ENCODE measurements at regions of chr1 and their contacts with region 1.

Region 1: GRCh38 chr1:28581536-28582247 is 10.4 kb upstream of the RAB42 start:
- H3K4me3 ChIP-seq: peak overlapping the region; percentile 74
- H3K27ac ChIP-seq: peak overlapping the region; percentile 79
- H3K4me1 ChIP-seq: no peaks in the 10 kb centered on the region; the same call in 1 of the 2 replicates
- CTCF ChIP-seq: peak; percentile 81

Region 2: DNA sequence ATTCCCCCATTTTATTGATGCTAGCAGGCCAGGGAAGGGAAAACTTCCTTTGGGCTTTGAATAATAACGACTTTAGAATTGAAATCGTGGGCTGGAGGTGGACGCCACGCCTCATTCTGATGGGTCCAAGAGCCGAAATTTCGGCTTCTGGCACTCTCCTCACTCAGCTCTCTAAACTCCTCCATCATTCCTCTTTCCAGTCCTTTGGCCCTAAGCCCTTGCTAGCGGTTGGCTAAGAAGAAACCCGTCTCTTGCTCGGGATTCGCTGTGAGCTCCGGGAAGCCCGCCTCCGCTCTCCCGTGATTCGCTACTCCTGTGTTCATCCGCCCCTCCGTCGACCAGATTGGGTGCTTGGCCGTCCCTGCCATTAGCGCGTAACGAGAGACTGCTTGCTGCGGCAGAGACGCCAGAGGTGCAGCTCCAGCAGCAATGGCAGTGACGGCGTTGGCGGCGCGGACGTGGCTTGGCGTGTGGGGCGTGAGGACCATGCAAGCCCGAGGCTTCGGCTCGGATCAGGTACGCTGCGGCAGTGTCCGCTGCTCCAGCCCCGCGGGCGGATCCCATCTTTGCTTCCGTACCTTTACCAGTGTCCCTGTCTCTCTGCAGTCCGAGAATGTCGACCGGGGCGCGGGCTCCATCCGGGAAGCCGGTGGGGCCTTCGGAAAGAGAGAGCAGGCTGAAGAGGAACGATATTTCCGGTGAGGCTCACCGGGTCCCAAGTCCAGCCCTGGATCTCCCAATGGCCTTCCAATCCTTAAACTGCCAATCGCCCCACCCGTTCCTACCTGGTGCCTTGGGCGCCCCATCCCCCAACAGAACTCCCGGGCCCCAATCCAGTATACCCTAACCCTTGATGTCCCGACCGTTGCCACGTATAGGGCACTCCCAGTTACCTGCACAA is 345.7 kb before region 1 on chr1 and contains the start of gene ATP5IF1:
- CTCF ChIA-PET with region 1: no interaction called
- POLR2A ChIA-PET with region 1: interaction called, 10 read pairs
- H3K4me3 ChIP-seq: peak within 1 kb of the TSS; percentile 77
- H3K27ac ChIP-seq: peak within 1 kb of the TSS; percentile 48; the same call in 1 of the 2 replicates
- H3K4me1 ChIP-seq: 0 out of 2 replicates have a peak, but pooled peaks cover 3% of the 10 kb centered on the region
- CTCF ChIP-seq: 0 out of 2 replicates have a peak, but pooled peaks have one; percentile 10

Region 3: DNA sequence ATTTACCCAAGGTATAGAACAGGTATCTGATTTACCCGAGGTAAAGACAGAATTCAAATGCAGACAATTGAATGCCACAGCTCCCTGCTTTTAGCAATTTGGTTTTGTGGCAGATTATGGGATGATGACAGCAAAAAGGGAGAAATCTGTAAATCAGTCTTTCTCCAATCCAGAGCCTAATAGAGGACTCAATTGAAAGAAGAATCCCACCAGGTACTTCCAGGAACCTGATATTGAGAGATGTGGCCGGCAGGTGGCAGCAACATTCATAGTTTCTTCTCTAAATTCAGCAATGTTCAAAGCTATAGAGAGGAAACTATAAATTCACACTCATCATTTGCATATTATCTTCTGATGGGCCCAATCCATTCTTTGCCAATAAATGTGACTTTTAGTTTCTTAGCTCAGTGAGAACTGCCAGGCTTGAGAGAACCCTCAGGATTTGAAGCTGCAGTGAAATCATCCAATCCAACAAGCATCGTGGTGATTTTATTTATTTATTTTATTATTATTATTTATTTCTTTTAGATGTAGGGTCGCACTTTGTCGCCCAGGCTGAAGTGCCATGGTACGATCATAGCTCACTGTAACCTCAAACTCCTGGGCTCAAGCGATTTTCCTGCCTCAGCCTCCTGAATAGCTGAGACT is 222.0 kb before region 1 on chr1:
- CTCF ChIA-PET with region 1: interaction called, 5 read pairs
- POLR2A ChIA-PET with region 1: interaction called, 11 read pairs
- H3K4me3 ChIP-seq: no peak overlapping the region
- H3K27ac ChIP-seq: no peak overlapping the region
- H3K4me1 ChIP-seq: no peaks in the 10 kb centered on the region
- CTCF ChIP-seq: 0 out of 2 replicates have a peak, but pooled peaks have one; percentile 20

Region 4: GRCh38 chr1:28518000-28518744 is 63.5 kb before region 1 on chr1:
- CTCF ChIA-PET with region 1: interaction called, 4 read pairs
- POLR2A ChIA-PET with region 1: interaction called, 32 read pairs
- H3K4me3 ChIP-seq: peak overlapping the region; percentile 71
- H3K27ac ChIP-seq: peak overlapping the region; percentile 94
- H3K4me1 ChIP-seq: no peaks in the 10 kb centered on the region
- CTCF ChIP-seq: peak; percentile 93

Region 5: DNA sequence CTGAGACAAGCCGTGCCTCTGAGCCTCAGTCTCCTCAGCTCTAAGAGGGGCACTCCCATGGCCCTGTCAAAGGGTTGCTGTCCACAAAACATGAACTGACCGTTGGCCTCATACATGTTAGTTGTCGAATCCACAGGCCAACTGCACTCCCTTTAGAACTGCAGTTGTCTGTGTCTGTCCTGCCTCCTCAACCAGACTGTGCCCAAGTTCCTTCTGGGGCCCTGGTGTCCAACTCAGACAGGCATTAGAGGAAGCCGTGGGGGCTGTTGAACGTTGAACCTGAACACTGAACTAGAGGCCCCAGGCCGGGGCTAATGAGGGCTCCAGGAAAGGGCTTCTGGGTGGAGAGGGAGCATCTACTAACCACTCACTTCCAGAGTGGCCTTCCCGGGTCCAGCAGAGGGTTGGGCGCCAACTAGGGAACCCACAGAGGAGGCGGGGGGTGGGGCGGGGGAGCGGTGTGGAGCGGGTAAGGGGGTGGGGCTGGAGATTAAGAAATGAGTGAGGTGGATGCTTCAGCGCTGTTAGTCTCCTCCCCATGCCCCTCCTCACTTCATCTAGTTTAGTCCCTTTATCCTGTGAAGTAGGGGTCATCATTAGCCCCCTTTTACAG is 10.1 kb after region 1 on chr1 and contains the start of gene RAB42:
- CTCF ChIA-PET with region 1: interaction called, 3 read pairs
- POLR2A ChIA-PET with region 1: interaction called, 16 read pairs
- H3K4me3 ChIP-seq: no peak within 1 kb of the TSS
- H3K27ac ChIP-seq: no peak within 1 kb of the TSS
- H3K4me1 ChIP-seq: no peaks in the 10 kb centered on the region
- CTCF ChIP-seq: no peak

Region 6: GRCh38 chr1:28736450-28737306 is 155.0 kb after region 1 on chr1 and contains the start of gene YTHDF2:
- CTCF ChIA-PET with region 1: no interaction called
- POLR2A ChIA-PET with region 1: interaction called, 16 read pairs
- H3K4me3 ChIP-seq: peak within 1 kb of the TSS; percentile 98
- H3K27ac ChIP-seq: peak within 1 kb of the TSS; percentile 95
- H3K4me1 ChIP-seq: no peaks in the 10 kb centered on the region; the same call in 1 of the 2 replicates
- CTCF ChIP-seq: peak; percentile 99

Measured in HEK293 (cell line).